K562 (cell line): ENCODE measurements at regions of chr2 and their contacts with region 1.

Region 1: GRCh38 chr2:158542577-158542976 is 85.8 kb downstream of the PKP4 start:
- DNase-seq: no peak
- ATAC-seq: no peak
- H3K4me3 ChIP-seq: no peak overlapping the region
- H3K27ac ChIP-seq: no peak overlapping the region
- H3K4me1 ChIP-seq: no peaks in the 10 kb centered on the region
- H3K27me3 ChIP-seq: no peaks in the 10 kb centered on the region
- CTCF ChIP-seq: no peak
- EP300 ChIP-seq: no peak
- POLR2A ChIP-seq: no peak
- RAD21 ChIP-seq: no peak

Region 2: GRCh38 chr2:158529379-158530259 is 13.0 kb before region 1 on chr2:
- CTCF ChIA-PET with region 1: no interaction called
- POLR2A ChIA-PET with region 1: interaction called, 10 read pairs
- in situ Hi-C with region 1: no loop called
- intact Hi-C with region 1: no loop called
- DNase-seq: no peak
- ATAC-seq: peak; percentile 53; the same call in 2 of the 3 replicates
- H3K4me3 ChIP-seq: no peak overlapping the region
- H3K27ac ChIP-seq: no peak overlapping the region
- H3K4me1 ChIP-seq: no peaks in the 10 kb centered on the region
- H3K27me3 ChIP-seq: no peaks in the 10 kb centered on the region
- CTCF ChIP-seq: no peak
- EP300 ChIP-seq: no peak
- POLR2A ChIP-seq: no peak
- RAD21 ChIP-seq: no peak